Naive thymus-derived CD4-positive, alpha-beta T cell (primary cell): ENCODE measurements at regions of chr5 and their contacts with region 1.

Region 1: GRCh38 chr5:39074016-39074886 is at the start of gene RICTOR:
- DNase-seq: peak; percentile 83 to 95 (median 88)
- ATAC-seq: peak; percentile 86
- H3K4me3 ChIP-seq: peak within 1 kb of the TSS; percentile 70
- H3K4me3 Mint-ChIP-seq: peak within 1 kb of the TSS; percentile 89 to 99 (median 98)
- H3K27ac ChIP-seq: peak within 1 kb of the TSS; percentile 100
- H3K27ac Mint-ChIP-seq: peak within 1 kb of the TSS; percentile 95 to 99 (median 98)
- H3K4me1 ChIP-seq: peaks cover 12 to 17% of the 10 kb centered on the region in 2 donors
- H3K4me1 Mint-ChIP-seq: peaks cover 23 to 63% (median 51%) of the 10 kb centered on the region in 7 donors
- H3K27me3 ChIP-seq: peaks cover 11 to 12% of the 10 kb centered on the region in 2 donors
- H3K27me3 Mint-ChIP-seq: peaks cover 4 to 29% (median 16%) of the 10 kb centered on the region in 5 donors
- total RNA-seq, gene RICTOR: 56.9 to 96.2 (median 86.5) TPM

Region 2: DNA sequence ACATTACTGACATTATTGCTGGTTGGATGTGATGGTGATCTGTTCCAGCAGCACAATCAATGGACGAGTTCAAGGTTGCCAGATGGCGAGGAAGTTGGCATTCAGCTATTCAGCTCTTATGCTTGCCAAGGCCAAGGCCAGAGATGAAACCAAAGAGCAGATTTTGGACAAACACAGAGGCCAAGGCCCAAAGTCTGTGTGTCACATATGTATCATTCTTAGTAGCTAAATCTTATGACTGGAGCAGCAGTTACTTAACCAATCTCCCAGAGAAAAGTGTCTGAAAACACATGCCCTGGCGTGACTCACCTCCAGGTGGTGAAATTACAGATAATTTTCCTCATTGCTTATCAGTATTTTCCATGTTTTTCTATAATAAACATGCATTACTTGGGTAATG is 1004.9 kb before region 1 on chr5:
- CTCF ChIA-PET with region 1: no interaction called
- POLR2A ChIA-PET with region 1: no interaction called
- intact Hi-C with region 1: no loop called
- DNase-seq: no peak
- ATAC-seq: no peak
- H3K4me3 ChIP-seq: no peak overlapping the region
- H3K4me3 Mint-ChIP-seq: no peak overlapping the region
- H3K27ac ChIP-seq: no peak overlapping the region
- H3K27ac Mint-ChIP-seq: no peak overlapping the region
- H3K4me1 ChIP-seq: no peaks in the 10 kb centered on the region
- H3K4me1 Mint-ChIP-seq: no peaks in the 10 kb centered on the region
- H3K27me3 ChIP-seq: no peaks in the 10 kb centered on the region
- H3K27me3 Mint-ChIP-seq: peaks cover 0 to 14% (median 0%) of the 10 kb centered on the region in 5 donors

Region 3: DNA sequence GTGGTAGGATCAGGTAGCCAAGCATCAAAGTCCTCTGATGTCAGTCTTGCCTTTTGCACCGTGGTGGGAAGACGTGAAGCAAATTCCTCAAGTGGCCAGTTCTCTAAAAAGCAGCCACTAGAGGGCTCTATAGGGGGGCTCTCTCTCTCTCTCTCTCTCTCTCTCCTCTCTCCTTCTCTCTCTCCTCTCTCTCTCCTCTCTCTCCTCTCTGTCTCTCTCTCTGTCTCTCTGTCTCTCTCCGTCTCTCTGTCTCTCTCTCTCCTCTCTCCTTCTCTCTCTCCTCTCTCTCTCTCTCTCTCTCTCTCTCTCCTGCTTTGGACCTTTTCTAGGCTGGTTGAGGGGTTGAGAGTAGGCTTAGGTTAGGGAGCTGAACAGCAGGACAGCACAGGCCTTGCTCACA is 242.3 kb before region 1 on chr5:
- CTCF ChIA-PET with region 1: no interaction called
- POLR2A ChIA-PET with region 1: no interaction called
- intact Hi-C with region 1: loop called in 1 of 2 experiments (anchors 5 kb)
- DNase-seq: no peak
- ATAC-seq: no peak
- H3K4me3 ChIP-seq: no peak overlapping the region
- H3K4me3 Mint-ChIP-seq: no peak overlapping the region
- H3K27ac ChIP-seq: no peak overlapping the region
- H3K27ac Mint-ChIP-seq: peak overlapping the region in 1 of 9 donors; percentile 59
- H3K4me1 ChIP-seq: no peaks in the 10 kb centered on the region
- H3K4me1 Mint-ChIP-seq: peaks cover 0 to 21% (median 0%) of the 10 kb centered on the region in 7 donors
- H3K27me3 ChIP-seq: no peaks in the 10 kb centered on the region
- H3K27me3 Mint-ChIP-seq: peaks cover 15 to 45% (median 30%) of the 10 kb centered on the region in 5 donors

Region 4: GRCh38 chr5:38905516-38905915 is 168.7 kb before region 1 on chr5:
- CTCF ChIA-PET with region 1: no interaction called
- POLR2A ChIA-PET with region 1: no interaction called
- intact Hi-C with region 1: no loop called
- DNase-seq: no peak
- ATAC-seq: no peak
- H3K4me3 ChIP-seq: no peak overlapping the region
- H3K4me3 Mint-ChIP-seq: no peak overlapping the region
- H3K27ac ChIP-seq: no peak overlapping the region
- H3K27ac Mint-ChIP-seq: no peak overlapping the region
- H3K4me1 ChIP-seq: no peaks in the 10 kb centered on the region
- H3K4me1 Mint-ChIP-seq: peaks cover 0 to 2% (median 0%) of the 10 kb centered on the region in 7 donors
- H3K27me3 ChIP-seq: peaks cover 0 to 4% of the 10 kb centered on the region in 2 donors
- H3K27me3 Mint-ChIP-seq: peaks cover 2 to 34% (median 26%) of the 10 kb centered on the region in 5 donors

Region 5: DNA sequence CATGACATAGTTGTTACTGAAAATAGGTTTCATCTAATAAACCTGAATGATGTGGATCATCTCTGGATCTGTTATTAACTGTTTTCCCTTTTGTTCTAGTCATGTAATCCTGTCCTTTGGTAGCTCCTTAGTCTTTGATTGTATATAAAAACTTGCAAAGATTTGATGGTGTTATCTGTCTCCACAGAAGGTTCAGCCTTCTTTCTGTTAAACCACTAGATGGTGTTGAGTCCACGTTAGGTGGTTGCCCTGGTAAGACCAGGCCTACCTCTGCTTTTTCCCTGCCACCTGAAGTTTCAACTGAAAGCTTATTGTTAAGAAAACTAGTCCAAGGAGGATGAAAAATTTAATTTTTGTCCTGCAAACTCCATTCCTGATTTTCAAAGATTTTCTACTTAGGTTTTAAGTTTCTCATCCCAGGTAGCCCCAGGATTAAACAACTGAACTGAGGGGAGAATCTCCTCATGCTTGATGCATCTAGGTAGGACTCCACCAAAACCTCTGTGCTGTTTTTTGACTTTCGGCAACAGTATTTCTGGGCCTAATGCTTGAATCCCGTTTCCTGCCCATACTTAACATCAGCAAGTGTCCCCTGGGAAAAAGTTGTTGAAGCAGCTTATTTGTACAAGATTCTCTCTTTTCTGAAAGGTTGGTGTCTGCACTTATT is 68.6 kb before region 1 on chr5:
- CTCF ChIA-PET with region 1: interaction called, 3 read pairs
- POLR2A ChIA-PET with region 1: no interaction called
- intact Hi-C with region 1: loop called in 1 of 2 experiments (anchors 5 kb)
- DNase-seq: peak in 6 of 9 donors; percentile 13 to 49 (median 34)
- ATAC-seq: peak; percentile 81
- H3K4me3 ChIP-seq: no peak overlapping the region
- H3K4me3 Mint-ChIP-seq: peak overlapping the region in 2 of 10 donors; percentile 10 to 27
- H3K27ac ChIP-seq: no peak overlapping the region
- H3K27ac Mint-ChIP-seq: peak overlapping the region in 8 of 9 donors; percentile 46 to 79 (median 68)
- H3K4me1 ChIP-seq: peaks cover 3 to 4% of the 10 kb centered on the region in 2 donors
- H3K4me1 Mint-ChIP-seq: peaks cover 23 to 71% (median 56%) of the 10 kb centered on the region in 7 donors
- H3K27me3 ChIP-seq: no peaks in the 10 kb centered on the region
- H3K27me3 Mint-ChIP-seq: no peaks in the 10 kb centered on the region

Region 6: GRCh38 chr5:39100851-39101396 is 26.7 kb after region 1 on chr5:
- CTCF ChIA-PET with region 1: interaction called, 4 read pairs
- POLR2A ChIA-PET with region 1: no interaction called
- intact Hi-C with region 1: loop called (anchors 2 to 5 kb)
- DNase-seq: peak in 1 of 9 donors; percentile 22
- ATAC-seq: peak; percentile 17
- H3K4me3 ChIP-seq: no peak overlapping the region
- H3K4me3 Mint-ChIP-seq: peak overlapping the region in 2 of 10 donors; percentile 39 to 54
- H3K27ac ChIP-seq: peak overlapping the region; percentile 2
- H3K27ac Mint-ChIP-seq: peak overlapping the region; percentile 38 to 91 (median 84)
- H3K4me1 ChIP-seq: peaks cover 14 to 20% of the 10 kb centered on the region in 2 donors
- H3K4me1 Mint-ChIP-seq: peaks cover 14 to 60% (median 40%) of the 10 kb centered on the region in 7 donors
- H3K27me3 ChIP-seq: no peaks in the 10 kb centered on the region
- H3K27me3 Mint-ChIP-seq: no peaks in the 10 kb centered on the region

Region 7: DNA sequence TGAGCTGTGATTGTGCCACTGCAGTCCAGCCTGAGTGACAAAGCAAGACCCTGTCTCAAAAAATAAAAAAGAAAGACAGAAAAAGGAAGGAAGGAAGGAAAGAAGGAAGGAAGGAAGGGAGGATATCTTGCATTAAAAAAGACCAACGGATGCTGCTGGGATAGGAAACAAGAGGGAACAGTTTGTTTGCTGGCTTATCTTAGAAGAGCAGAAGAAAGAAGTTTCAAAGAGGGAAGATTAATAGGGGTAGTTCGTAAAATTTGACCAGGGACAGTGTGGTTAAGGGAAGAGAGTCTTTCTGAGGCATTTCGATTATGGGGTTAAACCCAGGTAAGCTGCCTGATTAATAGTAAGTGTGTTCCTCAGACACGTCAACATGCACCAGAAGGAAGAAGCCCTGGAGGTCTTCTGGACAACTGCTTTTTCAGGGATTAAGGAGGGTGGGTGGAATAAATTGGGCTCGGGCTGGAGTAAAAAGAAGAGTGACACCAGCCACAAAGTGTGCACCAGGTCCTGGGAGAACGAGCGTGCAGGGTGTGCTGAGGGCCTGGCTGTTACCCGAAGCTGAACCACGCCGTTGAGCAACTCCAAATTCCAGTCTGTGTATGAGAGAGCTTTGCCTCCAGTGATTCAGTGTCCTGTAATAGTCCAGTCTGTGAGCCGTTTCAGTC is 120.3 kb after region 1 on chr5:
- CTCF ChIA-PET with region 1: interaction called, 3 read pairs
- POLR2A ChIA-PET with region 1: no interaction called
- intact Hi-C with region 1: loop called in 1 of 2 experiments (anchors 5 kb)
- DNase-seq: peak in 1 of 9 donors; percentile 17
- ATAC-seq: no peak
- H3K4me3 ChIP-seq: peak overlapping the region; percentile 46
- H3K4me3 Mint-ChIP-seq: peak overlapping the region; percentile 75 to 98 (median 88)
- H3K27ac ChIP-seq: peak overlapping the region; percentile 83
- H3K27ac Mint-ChIP-seq: peak overlapping the region; percentile 85 to 98 (median 94)
- H3K4me1 ChIP-seq: peaks cover 67 to 69% of the 10 kb centered on the region in 2 donors
- H3K4me1 Mint-ChIP-seq: peaks cover 52 to 78% (median 70%) of the 10 kb centered on the region in 7 donors
- H3K27me3 ChIP-seq: no peaks in the 10 kb centered on the region
- H3K27me3 Mint-ChIP-seq: no peaks in the 10 kb centered on the region

Region 8: GRCh38 chr5:39274398-39275085 is 200.3 kb after region 1 on chr5:
- CTCF ChIA-PET with region 1: no interaction called
- POLR2A ChIA-PET with region 1: no interaction called
- intact Hi-C with region 1: loop called (anchors 2 to 5 kb)
- DNase-seq: peak in 7 of 9 donors; percentile 29 to 52 (median 46)
- ATAC-seq: peak; percentile 68
- H3K4me3 ChIP-seq: peak overlapping the region; percentile 59
- H3K4me3 Mint-ChIP-seq: peak overlapping the region; percentile 63 to 88 (median 85)
- H3K27ac ChIP-seq: peak overlapping the region; percentile 74
- H3K27ac Mint-ChIP-seq: peak overlapping the region; percentile 92 to 98 (median 96)
- H3K4me1 ChIP-seq: peaks cover 34 to 49% of the 10 kb centered on the region in 2 donors
- H3K4me1 Mint-ChIP-seq: peaks cover 25 to 67% (median 47%) of the 10 kb centered on the region in 7 donors
- H3K27me3 ChIP-seq: no peaks in the 10 kb centered on the region
- H3K27me3 Mint-ChIP-seq: no peaks in the 10 kb centered on the region